Left ventricle myocardium inferior (tissue), 1 donor: ENCODE measurements at regions of chr15 and their contacts with region 1.

Region 1: DNA sequence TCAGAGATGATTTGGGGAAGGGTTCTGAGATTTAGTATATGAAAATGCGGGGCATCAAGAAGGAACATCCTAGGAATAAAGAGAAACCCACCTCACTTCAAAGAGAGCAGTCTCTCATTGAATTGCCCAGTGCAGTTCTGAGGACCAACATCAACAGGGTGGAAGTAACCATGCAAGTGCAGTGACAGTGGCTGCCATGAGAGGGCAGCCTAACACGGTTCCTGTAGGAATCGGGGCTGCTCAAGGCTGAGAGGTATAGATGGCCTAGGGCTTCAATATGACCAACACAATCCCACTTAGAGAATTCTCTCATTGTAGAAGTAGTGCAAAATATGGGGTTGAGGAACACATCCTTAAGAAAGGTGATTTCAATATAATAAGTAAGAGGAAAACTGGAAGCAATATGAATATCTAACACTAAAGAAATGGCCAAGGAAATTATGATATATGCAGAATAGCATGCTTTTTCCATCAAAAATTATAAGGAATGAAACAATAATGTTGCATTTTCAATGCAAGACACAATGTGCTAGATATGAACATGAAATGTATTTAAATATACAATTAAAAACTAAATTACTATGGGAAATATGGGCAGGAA is 51.1 kb upstream of the ARRDC4 start:
- DNase-seq: peak; percentile 58
- H3K4me3 ChIP-seq: no peak overlapping the region
- H3K27ac ChIP-seq: no peak overlapping the region
- H3K4me1 ChIP-seq: no peaks in the 10 kb centered on the region
- H3K27me3 ChIP-seq: peaks cover 58% of the 10 kb centered on the region
- CTCF ChIP-seq: peak; percentile 97

Region 2: DNA sequence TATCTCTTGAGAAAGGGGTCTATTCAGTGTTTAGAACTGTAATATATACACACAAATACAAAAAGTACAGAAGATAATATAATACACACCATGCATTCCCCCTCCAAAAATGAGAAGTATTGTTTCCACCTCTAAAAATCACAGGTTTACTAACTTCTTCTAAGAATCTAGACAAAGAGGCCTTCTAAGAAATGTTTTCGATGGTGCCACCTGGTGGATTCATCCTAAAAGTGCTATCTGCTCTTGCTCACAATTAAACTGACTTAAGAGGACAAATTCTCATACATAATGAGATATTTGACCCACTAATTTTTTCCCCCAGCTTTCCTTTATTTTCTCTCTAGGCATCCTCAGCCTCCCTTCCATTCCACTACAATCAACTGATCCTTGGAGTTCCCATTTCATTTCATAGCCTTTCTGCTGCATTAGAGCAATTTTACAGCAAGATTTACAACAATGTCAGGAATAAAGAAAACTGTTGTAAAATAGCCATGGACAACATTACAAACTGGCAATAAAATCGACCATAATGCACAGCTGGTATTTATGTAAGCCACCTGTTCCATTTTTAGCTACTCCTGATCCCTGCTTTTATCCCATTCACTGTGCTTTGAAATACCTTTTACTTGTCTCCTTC is 175.7 kb after region 1 on chr15:
- intact Hi-C with region 1: loop called (anchors 5 kb)
- DNase-seq: no peak
- H3K4me3 ChIP-seq: no peak overlapping the region
- H3K27ac ChIP-seq: no peak overlapping the region
- H3K4me1 ChIP-seq: no peaks in the 10 kb centered on the region
- H3K27me3 ChIP-seq: no peaks in the 10 kb centered on the region
- CTCF ChIP-seq: peak; percentile 74

Region 3: GRCh38 chr15:98177924-98178592 is 268.7 kb after region 1 on chr15:
- intact Hi-C with region 1: loop called (anchors 10 kb)
- DNase-seq: no peak
- H3K4me3 ChIP-seq: no peak overlapping the region
- H3K27ac ChIP-seq: no peak overlapping the region
- H3K4me1 ChIP-seq: no peaks in the 10 kb centered on the region
- H3K27me3 ChIP-seq: peaks cover 94% of the 10 kb centered on the region
- CTCF ChIP-seq: peak; percentile 69

Region 4: DNA sequence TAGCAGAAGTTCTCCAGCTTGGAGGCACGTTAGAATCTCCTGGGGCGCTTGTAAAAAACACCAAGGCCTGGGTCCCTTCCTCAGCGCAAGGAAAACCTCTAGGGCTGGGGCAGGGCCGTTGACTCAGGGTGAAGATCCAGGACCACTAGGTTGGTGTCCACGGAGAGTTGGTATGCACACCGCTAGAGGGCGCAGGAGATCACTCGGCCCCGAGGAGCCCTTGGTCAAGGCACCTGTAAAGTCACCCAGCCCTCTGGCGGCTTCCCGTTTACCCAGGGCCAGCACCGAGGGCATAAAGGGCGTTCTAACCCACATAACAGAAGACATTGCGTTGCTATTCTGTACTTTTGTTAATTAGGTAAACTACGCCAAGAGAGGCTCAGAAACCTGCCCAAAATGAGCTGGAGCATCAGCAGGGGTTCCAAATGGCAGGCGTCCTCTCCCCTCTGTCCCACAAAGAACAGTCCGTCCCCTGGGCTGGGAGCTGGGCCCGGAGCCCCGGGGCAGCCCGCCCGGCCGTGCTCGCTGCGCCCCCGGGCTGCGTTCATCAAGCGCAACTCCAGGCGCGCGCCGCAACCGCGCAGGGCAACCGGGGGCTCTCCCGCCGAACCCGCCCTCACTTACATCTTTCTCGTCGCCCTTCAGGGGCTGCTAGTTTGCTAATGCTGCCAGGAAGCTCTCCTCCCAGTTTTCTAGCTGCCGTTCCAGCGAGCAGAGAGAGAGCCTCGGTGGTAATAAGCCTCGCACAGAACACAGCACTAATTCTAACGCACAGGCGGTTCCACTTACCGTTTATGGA is 383.2 kb after region 1 on chr15:
- intact Hi-C with region 1: loop called (anchors 10 kb)
- DNase-seq: peak; percentile 20
- H3K4me3 ChIP-seq: peak overlapping the region; percentile 17
- H3K27ac ChIP-seq: no peak overlapping the region
- H3K4me1 ChIP-seq: peaks cover 8% of the 10 kb centered on the region
- H3K27me3 ChIP-seq: peaks cover 88% of the 10 kb centered on the region
- CTCF ChIP-seq: peak; percentile 59

Region 5: DNA sequence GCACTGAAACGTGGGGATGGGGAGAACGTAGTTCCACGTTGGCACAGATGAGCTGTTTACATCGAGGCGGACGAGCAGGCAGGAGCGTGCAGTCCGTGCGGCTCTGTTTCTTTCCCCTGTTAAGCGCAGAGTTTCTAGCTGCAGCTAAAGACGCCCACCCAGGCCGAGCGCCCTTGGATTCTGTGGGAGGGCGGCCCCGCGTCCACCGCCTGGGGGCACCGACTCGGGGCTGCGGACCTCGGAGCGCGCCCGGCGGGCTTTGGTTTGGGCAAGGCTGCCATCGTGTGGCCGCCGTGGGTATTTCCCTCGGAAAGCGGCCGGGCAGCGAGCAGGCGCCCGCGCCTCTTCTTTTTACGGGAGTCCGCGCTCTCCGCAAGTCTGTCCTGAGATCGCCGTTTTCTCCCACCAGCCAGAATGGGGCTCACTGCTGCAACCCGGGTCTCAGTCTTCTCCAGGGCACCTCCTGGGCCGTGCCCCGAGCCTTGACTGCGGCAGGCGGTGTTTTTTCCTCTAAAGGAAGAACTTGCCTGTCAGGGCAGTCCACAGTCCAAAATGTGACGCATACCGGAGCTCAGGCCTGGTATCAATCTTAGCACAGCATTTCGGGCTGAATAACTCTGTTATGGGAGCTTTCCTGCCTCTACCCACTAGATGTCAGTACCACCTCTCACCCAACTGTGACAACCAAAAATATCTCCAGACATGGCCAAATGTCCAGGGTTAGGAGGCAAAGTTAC is 519.0 kb after region 1 on chr15:
- intact Hi-C with region 1: loop called (anchors 10 kb)
- DNase-seq: peak; percentile 71
- H3K4me3 ChIP-seq: peak overlapping the region; percentile 59
- H3K27ac ChIP-seq: peak overlapping the region; percentile 24
- H3K4me1 ChIP-seq: peaks cover 6% of the 10 kb centered on the region
- H3K27me3 ChIP-seq: peaks cover 93% of the 10 kb centered on the region
- CTCF ChIP-seq: peak; percentile 89